Activated CD8-positive, alpha-beta T cell treated with anti-CD3 and anti-CD28 coated beads, Interleukin-2, amount 10 ng/mL, durations not matched to agents 7 days and 5 days (primary cell): ENCODE measurements at regions of chr3 and their contacts with region 1.

Region 1: DNA sequence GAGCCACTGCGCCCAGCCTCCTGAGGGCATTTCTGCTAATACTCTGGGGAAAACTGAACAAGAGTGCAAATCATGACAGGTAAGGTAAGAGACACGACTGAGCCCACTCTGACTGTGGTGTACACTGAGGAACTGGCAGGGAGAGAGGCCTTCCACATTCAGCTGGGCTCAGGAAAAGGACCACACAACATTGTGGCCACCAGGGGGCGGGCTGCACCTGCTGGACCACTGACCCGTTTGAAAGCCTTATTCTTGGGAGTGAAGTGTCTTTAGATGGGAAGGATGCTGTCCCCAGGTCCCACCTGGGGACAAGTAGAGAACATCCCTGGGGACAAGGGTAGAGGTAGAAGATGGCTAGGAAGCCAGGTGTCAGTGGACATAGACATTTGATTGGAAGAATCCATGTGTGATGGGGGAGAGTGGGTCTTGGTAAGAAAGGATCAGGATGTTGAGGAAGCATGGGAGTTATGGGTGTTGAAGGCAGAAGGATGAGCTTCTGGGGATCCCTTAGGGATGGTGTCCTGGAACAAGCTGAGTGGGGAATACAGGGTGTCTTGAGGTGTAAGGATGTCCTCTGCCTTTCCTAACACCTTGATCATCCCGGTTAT is 6.2 kb upstream of the CTDSPL start:
- DNase-seq: peak; percentile 81
- ATAC-seq: peak; percentile 54
- H3K4me3 Mint-ChIP-seq: no peak overlapping the region
- H3K27ac Mint-ChIP-seq: no peak overlapping the region
- H3K4me1 Mint-ChIP-seq: peaks cover 6% of the 10 kb centered on the region
- H3K27me3 Mint-ChIP-seq: peaks cover 20% of the 10 kb centered on the region

Region 2: GRCh38 chr3:37909067-37909911 is 53.8 kb after region 1 on chr3:
- CTCF ChIA-PET with region 1: interaction called, 12 read pairs
- POLR2A ChIA-PET with region 1: no interaction called
- DNase-seq: no peak
- ATAC-seq: no peak
- H3K4me3 Mint-ChIP-seq: no peak overlapping the region
- H3K27ac Mint-ChIP-seq: no peak overlapping the region
- H3K4me1 Mint-ChIP-seq: peaks cover 41% of the 10 kb centered on the region
- H3K27me3 Mint-ChIP-seq: peaks cover 29% of the 10 kb centered on the region

Region 3: GRCh38 chr3:37956723-37957528 is 101.5 kb after region 1 on chr3:
- CTCF ChIA-PET with region 1: interaction called, 20 read pairs
- POLR2A ChIA-PET with region 1: no interaction called
- DNase-seq: no peak
- ATAC-seq: peak; percentile 5
- H3K4me3 Mint-ChIP-seq: no peak overlapping the region
- H3K27ac Mint-ChIP-seq: peak overlapping the region; percentile 90
- H3K4me1 Mint-ChIP-seq: peaks cover 22% of the 10 kb centered on the region
- H3K27me3 Mint-ChIP-seq: no peaks in the 10 kb centered on the region

Region 4: GRCh38 chr3:37996785-37997301 is 141.4 kb after region 1 on chr3:
- CTCF ChIA-PET with region 1: interaction called, 21 read pairs
- POLR2A ChIA-PET with region 1: no interaction called
- DNase-seq: peak; percentile 88
- ATAC-seq: peak; percentile 44
- H3K4me3 Mint-ChIP-seq: no peak overlapping the region
- H3K27ac Mint-ChIP-seq: peak overlapping the region; percentile 93
- H3K4me1 Mint-ChIP-seq: peaks cover 58% of the 10 kb centered on the region
- H3K27me3 Mint-ChIP-seq: peaks cover 3% of the 10 kb centered on the region

Region 5: GRCh38 chr3:38004415-38005076 is 149.1 kb after region 1 on chr3:
- CTCF ChIA-PET with region 1: interaction called, 10 read pairs
- POLR2A ChIA-PET with region 1: no interaction called
- DNase-seq: peak; percentile 68
- ATAC-seq: peak; percentile 61
- H3K4me3 Mint-ChIP-seq: no peak overlapping the region
- H3K27ac Mint-ChIP-seq: peak overlapping the region; percentile 62
- H3K4me1 Mint-ChIP-seq: peaks cover 9% of the 10 kb centered on the region
- H3K27me3 Mint-ChIP-seq: no peaks in the 10 kb centered on the region